ENCODE measurements at regions of chr6 and their contacts with region 1.

Region 1: GRCh38 chr6:160766989-160767660 is 65.1 kb downstream of the PLG start:
- DNase-seq: peak; percentile 46 to 87
- H3K4me3 ChIP-seq: peak overlapping the region; percentile 39 to 70 (median 50)
- H3K27ac ChIP-seq: no peak overlapping the region
- H3K4me1 ChIP-seq: no peaks in the 10 kb centered on the region
- H3K27me3 ChIP-seq: peaks cover 0 to 6% (median 4%) of the 10 kb centered on the region in 4 experiments; a peak in 3 of 7 replicates
- CTCF ChIP-seq: peak; percentile 85 to 89 (median 88)
- EP300 ChIP-seq: no peak
- POLR2A ChIP-seq: no peak
- RAD21 ChIP-seq: peak; percentile 72 to 73

Region 2: DNA sequence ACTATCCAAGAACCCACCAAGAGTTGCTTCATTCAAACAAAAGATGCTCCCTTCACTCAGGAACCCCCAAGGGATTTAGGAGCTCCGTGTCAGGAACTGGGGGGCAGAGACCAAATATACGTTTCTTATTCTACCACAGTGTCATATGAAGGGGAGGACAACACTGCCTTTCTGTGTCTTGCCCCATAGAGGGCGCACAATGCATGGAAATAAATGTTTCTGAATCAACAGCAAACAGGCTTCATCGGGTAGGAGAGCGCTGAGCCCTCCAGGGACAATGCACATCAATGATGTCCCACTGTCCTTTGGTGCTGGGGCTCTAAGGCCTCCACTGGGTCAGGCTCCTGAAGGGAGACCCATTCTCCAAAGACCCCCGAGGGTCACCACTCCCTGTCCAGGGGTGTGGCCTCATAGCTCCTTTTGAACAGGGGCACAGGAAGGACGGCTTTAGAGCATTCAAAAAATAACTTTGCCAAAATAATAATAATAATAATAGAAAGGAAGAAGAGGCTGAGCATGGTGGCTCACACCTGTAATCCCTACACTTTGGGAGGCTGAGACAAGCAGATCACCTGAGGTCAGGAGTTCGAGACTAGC is 34.0 kb before region 1 on chr6:
- CTCF ChIA-PET with region 1: interaction called, 14 read pairs
- POLR2A ChIA-PET with region 1: no interaction called
- DNase-seq: peak in 1 of 2 experiments; percentile 48
- H3K4me3 ChIP-seq: no peak overlapping the region
- H3K27ac ChIP-seq: no peak overlapping the region
- H3K4me1 ChIP-seq: no peaks in the 10 kb centered on the region
- H3K27me3 ChIP-seq: no peaks in the 10 kb centered on the region; a peak in 1 of 7 replicates
- CTCF ChIP-seq: peak; percentile 11 to 88 (median 65)
- EP300 ChIP-seq: no peak
- POLR2A ChIP-seq: no peak
- RAD21 ChIP-seq: peak; percentile 65 to 76

Region 3: GRCh38 chr6:160791459-160791858 is 24.3 kb after region 1 on chr6:
- CTCF ChIA-PET with region 1: interaction called, 10 read pairs
- POLR2A ChIA-PET with region 1: no interaction called
- DNase-seq: no peak
- H3K4me3 ChIP-seq: no peak overlapping the region
- H3K27ac ChIP-seq: no peak overlapping the region
- H3K4me1 ChIP-seq: no peaks in the 10 kb centered on the region
- H3K27me3 ChIP-seq: no peaks in the 10 kb centered on the region
- CTCF ChIP-seq: no peak
- EP300 ChIP-seq: no peak
- POLR2A ChIP-seq: no peak
- RAD21 ChIP-seq: no peak

Region 4: GRCh38 chr6:160845748-160846147 is 78.6 kb after region 1 on chr6:
- CTCF ChIA-PET with region 1: no interaction called
- POLR2A ChIA-PET with region 1: no interaction called
- DNase-seq: no peak
- H3K4me3 ChIP-seq: no peak overlapping the region
- H3K27ac ChIP-seq: no peak overlapping the region
- H3K4me1 ChIP-seq: no peaks in the 10 kb centered on the region
- H3K27me3 ChIP-seq: no peaks in the 10 kb centered on the region
- CTCF ChIP-seq: no peak
- EP300 ChIP-seq: no peak
- POLR2A ChIP-seq: no peak
- RAD21 ChIP-seq: no peak

Measured in H1 (cell line).